Psoas muscle (tissue), 8 donors: ENCODE measurements at regions of chr9 and their contacts with region 1.

Region 1: DNA sequence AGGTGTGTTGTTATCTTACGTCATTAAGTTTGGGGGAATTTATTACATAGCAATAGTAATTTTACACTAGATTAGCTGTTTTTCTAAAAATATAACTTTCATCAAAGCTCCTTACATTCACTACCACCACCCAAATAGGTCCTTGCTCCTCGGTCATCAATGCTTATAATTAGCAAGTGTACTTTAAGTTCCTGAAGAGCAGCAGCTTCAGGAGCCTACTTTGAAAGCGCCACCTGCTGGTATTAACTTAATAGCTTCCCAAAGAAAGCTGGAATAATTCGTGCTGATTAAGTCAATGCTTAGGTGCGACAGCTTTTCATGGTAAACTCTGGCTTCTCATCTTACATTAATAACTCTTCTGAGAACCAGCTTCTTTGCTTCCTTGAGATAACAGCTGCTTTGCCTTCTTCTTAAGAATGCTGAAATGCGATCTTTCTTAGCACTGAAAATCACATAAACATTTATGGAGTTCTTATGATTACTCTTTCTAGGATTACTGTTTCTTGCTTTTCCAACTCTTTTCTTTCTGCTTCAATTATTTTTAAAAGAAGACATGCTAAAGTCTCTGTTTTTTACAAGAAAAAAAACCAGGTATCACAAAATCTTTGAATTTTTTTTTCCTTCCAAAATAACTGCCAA is 10.0 kb upstream of the C5 start:
- DNase-seq: no peak
- ATAC-seq: peak in 2 of 4 donors; percentile 48 to 76
- H3K4me3 ChIP-seq: no peak overlapping the region
- H3K27ac ChIP-seq: no peak overlapping the region
- H3K4me1 ChIP-seq: no peaks in the 10 kb centered on the region
- H3K27me3 ChIP-seq: no peaks in the 10 kb centered on the region
- CTCF ChIP-seq: peak; percentile 75

Region 2: GRCh38 chr9:120755827-120756434 is 304.2 kb before region 1 on chr9:
- intact Hi-C with region 1: loop called (anchors 2 to 5 kb)
- DNase-seq: no peak
- ATAC-seq: peak; percentile 43 to 88 (median 65)
- H3K4me3 ChIP-seq: no peak overlapping the region
- H3K27ac ChIP-seq: no peak overlapping the region
- H3K4me1 ChIP-seq: peaks cover 3% of the 10 kb centered on the region
- H3K27me3 ChIP-seq: no peaks in the 10 kb centered on the region
- CTCF ChIP-seq: peak; percentile 88

Region 3: GRCh38 chr9:120868676-120869359 is 191.3 kb before region 1 on chr9:
- intact Hi-C with region 1: loop called in 1 of 2 experiments (anchors 10 kb)
- DNase-seq: peak; percentile 98
- ATAC-seq: peak; percentile 94 to 97 (median 95)
- H3K4me3 ChIP-seq: peak overlapping the region; percentile 71
- H3K27ac ChIP-seq: peak overlapping the region; percentile 84
- H3K4me1 ChIP-seq: no peaks in the 10 kb centered on the region
- H3K27me3 ChIP-seq: no peaks in the 10 kb centered on the region
- CTCF ChIP-seq: peak; percentile 27

Region 4: DNA sequence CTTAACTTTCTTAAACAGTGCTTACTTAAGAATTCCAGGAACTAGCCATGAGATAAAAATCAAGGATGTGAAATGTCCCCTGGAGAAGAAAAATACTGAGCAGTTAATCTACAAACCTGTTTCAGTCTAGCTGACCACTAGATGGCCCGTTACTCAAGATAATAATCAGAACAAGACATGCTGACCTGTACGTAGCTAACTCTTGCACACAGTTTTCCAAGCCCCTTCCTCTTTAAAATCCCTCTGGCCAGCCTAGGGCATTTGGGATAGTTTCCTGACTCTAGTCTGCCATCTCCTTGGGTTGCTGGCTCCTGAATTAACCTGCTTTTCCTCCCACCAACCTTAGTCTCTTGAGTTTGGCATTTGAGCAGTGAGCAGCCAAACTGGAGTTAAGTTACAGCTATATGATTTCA is 74.3 kb before region 1 on chr9:
- intact Hi-C with region 1: loop called (anchors 2 to 5 kb)
- DNase-seq: no peak
- ATAC-seq: peak in 1 of 4 donors; percentile 64
- H3K4me3 ChIP-seq: no peak overlapping the region
- H3K27ac ChIP-seq: no peak overlapping the region
- H3K4me1 ChIP-seq: no peaks in the 10 kb centered on the region
- H3K27me3 ChIP-seq: no peaks in the 10 kb centered on the region
- CTCF ChIP-seq: peak; percentile 47